Panc1 (cell line): ENCODE measurements at regions of chr3 and their contacts with region 1.

Region 1: DNA sequence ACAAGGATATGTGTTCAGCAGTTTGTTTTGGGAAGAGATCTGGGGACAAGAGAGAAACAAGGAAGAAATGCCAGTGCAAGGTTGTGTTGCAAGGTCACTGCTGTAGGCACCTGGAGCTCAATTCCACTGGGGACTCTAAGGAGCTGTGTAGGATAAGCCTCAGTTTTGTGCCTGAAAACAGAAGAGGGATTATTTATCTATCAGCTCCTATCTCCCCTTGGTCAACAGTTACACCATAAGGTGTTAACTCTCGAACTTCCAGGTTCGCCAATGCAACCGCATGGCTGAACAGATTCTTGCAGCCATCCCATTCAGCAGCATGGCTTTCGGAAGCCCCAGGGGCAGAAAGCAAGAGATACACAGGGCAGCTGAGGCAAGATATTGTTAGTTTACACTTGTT is 41.6 kb upstream of the CNOT10 start:
- DNase-seq: no peak
- ATAC-seq: no peak
- H3K4me3 ChIP-seq: no peak overlapping the region
- H3K27ac ChIP-seq: no peak overlapping the region
- H3K4me1 ChIP-seq: no peaks in the 10 kb centered on the region
- H3K27me3 ChIP-seq: no peaks in the 10 kb centered on the region; the same call in 1 of the 2 replicates
- CTCF ChIP-seq: no peak

Region 2: GRCh38 chr3:32532434-32532833 is 110.9 kb before region 1 on chr3:
- CTCF ChIA-PET with region 1: interaction called, 10 read pairs
- POLR2A ChIA-PET with region 1: no interaction called
- in situ Hi-C with region 1: no loop called
- intact Hi-C with region 1: no loop called
- DNase-seq: no peak
- ATAC-seq: no peak
- H3K4me3 ChIP-seq: no peak overlapping the region
- H3K27ac ChIP-seq: no peak overlapping the region
- H3K4me1 ChIP-seq: no peaks in the 10 kb centered on the region
- H3K27me3 ChIP-seq: no peaks in the 10 kb centered on the region
- CTCF ChIP-seq: no peak